H1 (cell line): ENCODE measurements at regions of chr5 and their contacts with region 1.

Region 1: GRCh38 chr5:153517241-153517611 is 26.8 kb downstream of the GRIA1 start:
- DNase-seq: peak in 1 of 2 experiments; percentile 46
- H3K4me3 ChIP-seq: no peak overlapping the region; a peak in 1 of 8 replicates
- H3K27ac ChIP-seq: peak overlapping the region; percentile 46; the same call in 1 of the 2 replicates
- H3K4me1 ChIP-seq: peaks cover 9 to 15% (median 13%) of the 10 kb centered on the region in 4 experiments
- H3K27me3 ChIP-seq: no peaks in the 10 kb centered on the region
- CTCF ChIP-seq: no peak
- EP300 ChIP-seq: no peak
- POLR2A ChIP-seq: no peak
- RAD21 ChIP-seq: no peak

Region 2: GRCh38 chr5:153530357-153531143 is 13.3 kb after region 1 on chr5:
- CTCF ChIA-PET with region 1: interaction called, 10 read pairs
- POLR2A ChIA-PET with region 1: no interaction called
- DNase-seq: no peak
- H3K4me3 ChIP-seq: no peak overlapping the region
- H3K27ac ChIP-seq: no peak overlapping the region
- H3K4me1 ChIP-seq: no peaks in the 10 kb centered on the region
- H3K27me3 ChIP-seq: no peaks in the 10 kb centered on the region
- CTCF ChIP-seq: no peak
- EP300 ChIP-seq: no peak
- POLR2A ChIP-seq: no peak
- RAD21 ChIP-seq: no peak

Region 3: DNA sequence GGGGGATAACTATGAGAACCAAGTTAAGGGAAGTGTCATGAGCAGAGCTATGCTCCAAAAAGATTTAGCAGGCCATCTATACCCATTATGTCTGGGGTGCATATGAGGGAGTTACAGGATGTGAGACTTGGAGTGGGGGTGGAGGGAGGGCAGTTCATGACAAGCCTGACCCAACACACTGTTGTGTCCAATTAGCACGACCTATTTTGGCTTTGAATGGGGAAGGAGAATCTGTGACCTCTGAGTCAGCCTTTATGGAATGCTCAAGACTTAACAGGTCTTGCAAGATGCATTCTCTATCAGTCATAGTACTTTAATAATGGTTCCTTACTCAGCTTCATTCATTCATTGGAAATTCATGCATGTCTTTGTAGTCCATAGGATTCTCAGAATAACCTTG is 45.0 kb after region 1 on chr5:
- CTCF ChIA-PET with region 1: no interaction called
- POLR2A ChIA-PET with region 1: no interaction called
- DNase-seq: peak in 1 of 2 experiments; percentile 29
- H3K4me3 ChIP-seq: no peak overlapping the region
- H3K27ac ChIP-seq: no peak overlapping the region
- H3K4me1 ChIP-seq: no peaks in the 10 kb centered on the region
- H3K27me3 ChIP-seq: no peaks in the 10 kb centered on the region
- CTCF ChIP-seq: no peak
- EP300 ChIP-seq: no peak
- POLR2A ChIP-seq: no peak
- RAD21 ChIP-seq: no peak

Region 4: DNA sequence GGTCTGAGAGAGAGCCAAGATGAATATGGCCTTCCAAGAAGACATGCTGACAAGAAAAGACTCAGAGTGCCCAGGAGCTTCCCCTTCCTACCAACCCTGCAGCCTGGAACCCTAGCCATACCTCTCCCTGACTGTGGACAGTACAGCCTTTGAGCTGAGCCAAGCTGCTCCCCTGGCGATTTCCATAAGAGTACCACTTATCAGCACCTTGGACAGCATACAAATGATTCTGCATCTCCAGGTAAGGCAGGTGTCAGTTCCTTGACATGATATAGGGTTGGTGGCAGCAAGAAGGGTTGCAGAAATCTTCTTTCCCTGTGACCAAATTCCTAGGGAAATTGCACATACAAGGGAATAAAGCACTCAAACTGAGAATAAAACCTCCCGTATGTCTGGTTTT is 579.8 kb after region 1 on chr5:
- CTCF ChIA-PET with region 1: no interaction called
- POLR2A ChIA-PET with region 1: no interaction called
- DNase-seq: no peak
- H3K4me3 ChIP-seq: no peak overlapping the region
- H3K27ac ChIP-seq: no peak overlapping the region
- H3K4me1 ChIP-seq: peaks cover 0 to 5% (median 0%) of the 10 kb centered on the region in 4 experiments; a peak in 2 of 7 replicates
- H3K27me3 ChIP-seq: no peaks in the 10 kb centered on the region
- CTCF ChIP-seq: no peak
- EP300 ChIP-seq: no peak
- POLR2A ChIP-seq: no peak
- RAD21 ChIP-seq: 0 out of 4 replicates have a peak, but pooled peaks of 1 of the 2 experiments have one; percentile 1